Prostate gland (tissue), 2 donors: ENCODE measurements at regions of chr3 and their contacts with region 1.

Region 1: GRCh38 chr3:9249273-9250192 is at the start of gene SRGAP3:
- DNase-seq: peak; percentile 91
- H3K4me3 ChIP-seq: peak within 1 kb of the TSS; percentile 40 to 41
- H3K27ac ChIP-seq: peak within 1 kb of the TSS; percentile 21 to 26
- H3K4me1 ChIP-seq: no peaks in the 10 kb centered on the region
- H3K27me3 ChIP-seq: no peaks in the 10 kb centered on the region
- CTCF ChIP-seq: peak in 2 of 4 experiments; percentile 67 to 76
- POLR2A ChIP-seq: peak; percentile 81
- total RNA-seq, gene SRGAP3: 23.6 to 50.3 TPM

Region 2: DNA sequence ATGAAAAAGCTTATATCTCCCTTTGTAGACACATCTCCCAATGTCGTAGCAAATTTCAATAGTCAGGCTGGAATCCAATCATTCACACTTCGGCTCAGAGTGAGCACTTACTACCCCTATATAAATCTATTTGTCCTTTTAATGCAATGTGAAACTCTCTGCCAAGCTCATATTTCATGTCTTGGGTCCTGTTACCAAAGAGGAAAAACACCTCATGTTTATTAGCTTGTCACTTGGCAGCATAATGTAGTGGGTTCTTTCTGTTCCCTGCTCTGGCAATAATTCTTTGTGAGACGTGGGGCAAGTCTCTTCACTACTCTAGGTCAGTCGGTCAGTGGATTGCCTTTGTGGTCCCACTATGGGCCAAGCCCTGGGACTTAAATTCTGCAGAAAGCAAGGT is 107.2 kb before region 1 on chr3:
- intact Hi-C with region 1: loop called (anchors 5 kb)
- DNase-seq: peak; percentile 74
- H3K4me3 ChIP-seq: no peak overlapping the region
- H3K27ac ChIP-seq: peak overlapping the region in 1 of 2 donors; percentile 21
- H3K4me1 ChIP-seq: no peaks in the 10 kb centered on the region
- H3K27me3 ChIP-seq: peaks cover 2% of the 10 kb centered on the region
- CTCF ChIP-seq: no peak
- POLR2A ChIP-seq: no peak

Region 3: GRCh38 chr3:9715764-9716437 is 466.4 kb after region 1 on chr3:
- intact Hi-C with region 1: no loop called
- DNase-seq: peak; percentile 85
- H3K4me3 ChIP-seq: no peak overlapping the region
- H3K27ac ChIP-seq: peak overlapping the region; percentile 21 to 38
- H3K4me1 ChIP-seq: no peaks in the 10 kb centered on the region
- H3K27me3 ChIP-seq: no peaks in the 10 kb centered on the region
- CTCF ChIP-seq: peak; percentile 37 to 92 (median 84)
- POLR2A ChIP-seq: no peak